ENCODE measurements at regions of chr14 and their contacts with region 1.

Region 1: DNA sequence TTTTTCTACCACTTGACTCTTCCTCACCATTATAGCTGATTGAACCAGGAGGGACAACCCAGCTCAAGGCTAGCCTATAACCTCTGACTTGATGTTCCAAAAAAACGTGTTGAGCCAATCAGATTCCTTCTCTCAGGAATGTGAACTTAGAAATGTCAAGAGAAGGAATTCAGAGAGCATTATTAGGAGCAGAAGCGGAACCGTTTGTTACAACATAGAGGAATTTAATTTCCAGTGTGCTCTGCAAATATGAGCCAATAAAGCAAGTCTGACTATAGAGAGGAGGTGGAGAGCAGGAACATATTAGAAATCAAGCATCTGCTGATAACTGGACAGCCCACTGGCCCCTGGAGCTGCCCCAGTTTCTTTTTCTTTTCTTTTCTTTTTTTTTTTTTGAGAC is 15.3 kb upstream of the PELI2 start:
- DNase-seq: no peak
- H3K4me3 ChIP-seq: no peak overlapping the region
- H3K27ac ChIP-seq: peak overlapping the region in 1 of 2 donors; percentile 38
- H3K4me1 ChIP-seq: peaks cover 0 to 29% (median 3%) of the 10 kb centered on the region in 4 donors
- H3K27me3 ChIP-seq: no peaks in the 10 kb centered on the region
- CTCF ChIP-seq: no peak

Region 2: GRCh38 chr14:56027916-56028712 is 74.8 kb before region 1 on chr14:
- intact Hi-C with region 1: no loop called
- DNase-seq: no peak
- H3K4me3 ChIP-seq: no peak overlapping the region
- H3K27ac ChIP-seq: peak overlapping the region; percentile 27 to 42
- H3K4me1 ChIP-seq: peaks cover 0 to 21% (median 11%) of the 10 kb centered on the region in 4 donors
- H3K27me3 ChIP-seq: no peaks in the 10 kb centered on the region
- CTCF ChIP-seq: no peak

Region 3: GRCh38 chr14:56117765-56118610 is 15.0 kb after region 1 on chr14 and contains the start of gene PELI2:
- intact Hi-C with region 1: loop called (anchors 2 kb)
- DNase-seq: peak; percentile 74 to 89
- H3K4me3 ChIP-seq: peak within 1 kb of the TSS; percentile 78 to 86
- H3K27ac ChIP-seq: peak within 1 kb of the TSS; percentile 91 to 95
- H3K4me1 ChIP-seq: peaks cover 0 to 32% (median 25%) of the 10 kb centered on the region in 4 donors
- H3K27me3 ChIP-seq: no peaks in the 10 kb centered on the region
- CTCF ChIP-seq: peak; percentile 16 to 43

Region 4: DNA sequence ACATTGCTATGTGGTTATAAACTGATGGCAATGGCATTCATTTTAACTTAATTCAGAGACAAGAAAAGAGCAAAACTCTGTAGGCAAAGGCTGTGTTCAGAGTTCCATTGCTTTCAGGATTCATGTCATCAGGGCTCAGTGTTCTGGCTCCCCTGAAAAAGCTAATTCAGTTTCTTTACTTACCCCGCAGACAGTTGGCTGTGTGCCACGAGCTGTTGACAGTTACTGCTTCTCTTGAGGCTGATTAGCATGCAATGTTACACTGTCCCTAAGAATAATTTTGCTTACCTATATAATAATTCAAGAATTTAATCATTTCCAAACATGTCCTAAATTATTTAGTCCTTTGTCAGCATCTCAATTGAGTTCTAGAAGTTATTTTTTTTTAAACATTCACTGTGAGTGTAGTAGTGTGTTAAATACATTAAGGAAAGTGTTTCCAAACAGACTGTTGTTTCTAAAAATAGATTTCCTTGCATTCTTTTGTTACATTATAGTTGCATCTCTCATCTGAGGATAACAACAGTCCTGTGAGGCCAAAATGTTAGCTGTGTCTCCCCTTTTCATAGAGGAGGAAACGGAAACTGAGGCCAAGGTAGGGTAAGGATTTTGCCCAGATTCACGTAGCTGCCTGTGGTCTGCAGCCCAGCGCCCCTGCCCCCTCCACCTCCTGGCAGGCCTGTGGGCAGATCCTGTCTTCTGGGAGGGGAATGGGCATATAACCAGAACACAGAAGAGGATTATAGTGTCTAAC is 113.9 kb after region 1 on chr14:
- intact Hi-C with region 1: no loop called
- DNase-seq: peak in 1 of 2 donors; percentile 61
- H3K4me3 ChIP-seq: no peak overlapping the region
- H3K27ac ChIP-seq: no peak overlapping the region
- H3K4me1 ChIP-seq: peaks cover 0 to 50% (median 19%) of the 10 kb centered on the region in 4 donors
- H3K27me3 ChIP-seq: no peaks in the 10 kb centered on the region
- CTCF ChIP-seq: no peak

Region 5: GRCh38 chr14:56300495-56300894 is 197.6 kb after region 1 on chr14:
- intact Hi-C with region 1: no loop called
- DNase-seq: no peak
- H3K4me3 ChIP-seq: no peak overlapping the region
- H3K27ac ChIP-seq: no peak overlapping the region
- H3K4me1 ChIP-seq: peaks cover 0 to 20% (median 3%) of the 10 kb centered on the region in 4 donors
- H3K27me3 ChIP-seq: no peaks in the 10 kb centered on the region
- CTCF ChIP-seq: no peak